PC-9 (cell line): ENCODE measurements at regions of chr14 and their contacts with region 1.

Region 1: GRCh38 chr14:68849413-68849812 is 56.5 kb upstream of the ZFP36L1 start:
- DNase-seq: no peak
- H3K4me3 ChIP-seq: no peak overlapping the region
- H3K27ac ChIP-seq: no peak overlapping the region
- H3K4me1 ChIP-seq: peaks cover 10% of the 10 kb centered on the region; the same call in 1 of the 2 replicates
- H3K27me3 ChIP-seq: no peaks in the 10 kb centered on the region
- CTCF ChIP-seq: no peak

Region 2: GRCh38 chr14:68896132-68896531 is 46.7 kb after region 1 on chr14:
- CTCF ChIA-PET with region 1: no interaction called
- POLR2A ChIA-PET with region 1: no interaction called
- intact Hi-C with region 1: no loop called
- DNase-seq: no peak
- H3K4me3 ChIP-seq: no peak overlapping the region
- H3K27ac ChIP-seq: no peak overlapping the region
- H3K4me1 ChIP-seq: no peaks in the 10 kb centered on the region
- H3K27me3 ChIP-seq: no peaks in the 10 kb centered on the region
- CTCF ChIP-seq: no peak; the same call in 1 of the 2 replicates

Region 3: DNA sequence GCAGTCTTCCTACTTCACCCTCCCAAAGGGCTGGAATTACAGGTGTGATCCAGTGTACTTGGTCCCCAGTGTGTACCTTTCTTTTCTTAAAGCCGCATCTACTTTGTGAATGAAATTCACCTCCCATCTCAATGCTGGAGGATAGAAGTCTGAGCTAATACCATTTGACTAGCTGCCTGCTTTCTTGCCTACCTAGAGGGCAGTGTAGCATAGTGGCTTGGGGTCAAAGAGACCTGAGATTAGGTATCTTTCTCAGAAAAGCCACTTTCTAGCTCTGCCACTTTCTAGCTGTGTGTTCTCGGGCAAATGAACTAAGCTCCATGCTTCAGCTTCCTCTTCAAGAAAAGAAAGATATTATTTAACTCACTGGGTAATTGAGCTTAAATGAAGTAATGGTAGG is 1046.7 kb after region 1 on chr14:
- CTCF ChIA-PET with region 1: interaction called, 10 read pairs
- POLR2A ChIA-PET with region 1: no interaction called
- intact Hi-C with region 1: no loop called
- DNase-seq: no peak
- H3K4me3 ChIP-seq: no peak overlapping the region
- H3K27ac ChIP-seq: no peak overlapping the region
- H3K4me1 ChIP-seq: no peaks in the 10 kb centered on the region
- H3K27me3 ChIP-seq: peaks cover 12% of the 10 kb centered on the region; the same call in 1 of the 2 replicates
- CTCF ChIP-seq: no peak